ENCODE measurements at regions of chr16 and their contacts with region 1.

Region 1: DNA sequence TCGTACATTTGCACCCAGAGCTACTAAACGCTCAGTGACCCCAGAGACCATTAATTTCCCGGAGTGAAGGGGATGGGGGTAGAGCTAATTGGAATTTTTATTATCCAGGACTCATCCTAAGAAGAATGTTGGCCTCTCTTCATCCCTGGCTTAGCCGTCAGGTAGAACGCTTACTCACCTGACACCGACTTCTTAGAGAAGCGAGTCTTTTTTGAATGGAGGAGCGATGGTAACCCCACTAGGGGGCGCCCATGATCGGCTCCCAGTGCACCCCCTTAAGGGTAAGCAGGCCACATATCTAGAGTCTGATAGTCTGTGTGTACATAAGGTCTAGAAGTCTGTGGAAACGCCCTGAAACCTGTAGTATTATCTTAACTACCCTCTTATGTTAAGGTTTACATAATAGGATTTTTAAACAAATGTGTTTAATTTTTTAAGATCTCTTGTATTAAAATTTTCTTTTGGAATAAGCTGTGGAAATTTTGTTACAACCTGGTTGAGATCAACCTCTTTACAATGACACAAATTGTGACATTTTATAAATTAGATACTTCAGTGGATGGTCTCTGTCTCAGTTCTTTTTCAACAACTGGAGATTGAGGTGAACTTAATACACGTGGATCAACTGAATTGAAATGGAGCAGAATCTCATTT is 229.8 kb downstream of the CPPED1 start:
- DNase-seq: no peak
- ATAC-seq: peak; percentile 81
- H3K4me3 ChIP-seq: no peak overlapping the region
- H3K27ac ChIP-seq: peak overlapping the region; percentile 35; the same call in 1 of the 2 replicates
- H3K4me1 ChIP-seq: peaks cover 9% of the 10 kb centered on the region
- H3K27me3 ChIP-seq: no peaks in the 10 kb centered on the region
- CTCF ChIP-seq: peak; percentile 55 to 70 (median 69)
- EP300 ChIP-seq: no peak
- POLR2A ChIP-seq: no peak
- RAD21 ChIP-seq: peak; percentile 82

Region 2: DNA sequence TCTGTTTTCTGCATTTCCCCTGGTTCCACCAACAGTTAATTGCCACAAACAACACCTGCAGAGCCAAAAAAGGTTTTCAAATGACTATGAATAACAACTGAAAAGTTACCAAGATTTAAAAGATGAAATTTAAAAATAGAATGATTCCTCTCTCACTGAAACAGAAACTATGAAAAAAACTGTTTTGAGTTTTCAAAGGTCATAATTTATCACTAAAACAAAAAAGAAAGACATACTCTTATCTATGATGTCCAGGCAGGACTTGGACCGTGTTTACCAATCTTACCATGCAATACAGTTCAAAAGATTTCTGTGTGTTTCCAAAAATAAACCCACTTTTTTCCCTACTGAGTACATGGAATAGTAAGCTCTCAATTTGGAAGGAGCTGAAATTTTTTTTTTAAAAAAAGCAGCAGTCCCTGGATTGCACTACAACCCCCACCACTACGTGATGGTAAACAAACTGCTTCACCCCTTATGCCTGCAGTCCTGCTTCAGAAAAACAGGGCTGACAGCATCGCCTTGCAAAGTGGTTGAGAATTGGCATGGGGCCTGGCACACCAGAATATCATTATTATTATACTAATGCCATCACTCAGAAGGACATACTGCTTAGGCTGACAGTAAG is 839.7 kb before region 1 on chr16:
- CTCF ChIA-PET with region 1: no interaction called
- POLR2A ChIA-PET with region 1: no interaction called
- RAD21 ChIA-PET with region 1: no interaction called
- SMC1A ChIA-PET with region 1: no interaction called
- in situ Hi-C with region 1: no loop called
- intact Hi-C with region 1: no loop called
- DNase-seq: no peak
- ATAC-seq: peak; percentile 47
- H3K4me3 ChIP-seq: peak overlapping the region; percentile 22
- H3K27ac ChIP-seq: peak overlapping the region; percentile 74
- H3K4me1 ChIP-seq: peaks cover 56% of the 10 kb centered on the region
- H3K27me3 ChIP-seq: no peaks in the 10 kb centered on the region
- CTCF ChIP-seq: no peak
- EP300 ChIP-seq: peak; percentile 38 to 73; a peak in 2 of 4 replicates
- POLR2A ChIP-seq: no peak
- RAD21 ChIP-seq: no peak

Region 3: GRCh38 chr16:12535535-12536411 is 38.1 kb before region 1 on chr16:
- CTCF ChIA-PET with region 1: interaction called, 26 read pairs
- POLR2A ChIA-PET with region 1: no interaction called
- RAD21 ChIA-PET with region 1: interaction called, 13 read pairs
- SMC1A ChIA-PET with region 1: interaction called, 25 read pairs
- in situ Hi-C with region 1: no loop called
- intact Hi-C with region 1: loop called (anchors 2 kb)
- DNase-seq: peak; percentile 97
- ATAC-seq: peak; percentile 79
- H3K4me3 ChIP-seq: 0 out of 2 replicates have a peak overlapping the region, but pooled peaks have one; percentile 14
- H3K27ac ChIP-seq: peak overlapping the region; percentile 77
- H3K4me1 ChIP-seq: peaks cover 57% of the 10 kb centered on the region
- H3K27me3 ChIP-seq: no peaks in the 10 kb centered on the region
- CTCF ChIP-seq: peak in 2 of 3 experiments; percentile 24 to 49; a peak in 3 of 6 replicates
- EP300 ChIP-seq: peak; percentile 79 to 83
- POLR2A ChIP-seq: peak; percentile 68
- RAD21 ChIP-seq: peak; percentile 48

Region 4: GRCh38 chr16:12587170-12587569 is 13.3 kb after region 1 on chr16:
- CTCF ChIA-PET with region 1: interaction called, 16 read pairs
- POLR2A ChIA-PET with region 1: no interaction called
- RAD21 ChIA-PET with region 1: interaction called, 3 read pairs
- SMC1A ChIA-PET with region 1: interaction called, 7 read pairs
- in situ Hi-C with region 1: no loop called
- intact Hi-C with region 1: no loop called
- DNase-seq: no peak
- ATAC-seq: no peak
- H3K4me3 ChIP-seq: no peak overlapping the region
- H3K27ac ChIP-seq: no peak overlapping the region
- H3K4me1 ChIP-seq: peaks cover 4% of the 10 kb centered on the region
- H3K27me3 ChIP-seq: no peaks in the 10 kb centered on the region
- CTCF ChIP-seq: no peak
- EP300 ChIP-seq: no peak
- POLR2A ChIP-seq: no peak
- RAD21 ChIP-seq: no peak

Region 5: DNA sequence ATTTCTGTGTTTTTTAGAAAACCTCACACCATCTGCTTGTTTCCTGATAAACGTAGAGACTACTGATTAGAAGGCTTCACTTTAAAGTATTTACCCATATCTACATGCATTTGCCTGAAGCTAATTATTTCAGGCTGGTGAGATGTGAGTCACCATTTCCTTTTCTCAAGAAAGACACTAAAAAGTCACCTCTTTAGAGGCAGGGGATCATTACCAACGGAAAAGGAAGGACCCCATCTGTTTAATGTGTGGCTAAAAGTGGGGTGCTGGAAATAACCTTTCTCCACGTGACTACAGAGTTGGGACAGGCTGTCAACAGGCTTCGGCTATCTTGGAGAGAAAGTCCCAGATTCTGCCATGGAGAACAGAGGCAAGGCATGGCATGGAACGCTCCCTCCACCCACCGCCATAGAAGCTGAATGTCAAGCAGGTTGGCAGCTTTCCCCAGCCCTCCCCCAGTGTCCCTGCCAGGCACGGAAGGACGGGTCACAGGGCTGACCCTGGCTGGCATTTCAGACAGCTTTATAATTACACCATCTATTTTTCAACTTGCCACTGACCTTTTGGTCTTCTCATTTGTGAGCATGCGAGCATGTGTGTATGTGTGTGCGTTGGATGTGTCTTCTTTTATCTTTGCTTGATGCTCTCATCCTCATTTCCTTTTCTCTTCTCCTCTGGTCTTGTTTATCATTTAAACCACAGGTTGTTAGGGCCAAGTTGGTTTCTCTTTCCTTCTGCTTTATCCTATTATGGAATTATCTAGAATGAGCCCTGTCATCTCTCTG is 72.8 kb after region 1 on chr16:
- CTCF ChIA-PET with region 1: no interaction called
- POLR2A ChIA-PET with region 1: no interaction called
- RAD21 ChIA-PET with region 1: interaction called, 4 read pairs
- SMC1A ChIA-PET with region 1: interaction called, 4 read pairs
- in situ Hi-C with region 1: no loop called
- intact Hi-C with region 1: loop called (anchors 5 kb)
- DNase-seq: peak; percentile 70
- ATAC-seq: peak; percentile 71
- H3K4me3 ChIP-seq: no peak overlapping the region
- H3K27ac ChIP-seq: 0 out of 2 replicates have a peak overlapping the region, but pooled peaks have one; percentile 2
- H3K4me1 ChIP-seq: no peaks in the 10 kb centered on the region
- H3K27me3 ChIP-seq: no peaks in the 10 kb centered on the region
- CTCF ChIP-seq: no peak
- EP300 ChIP-seq: no peak
- POLR2A ChIP-seq: no peak
- RAD21 ChIP-seq: no peak

Region 6: DNA sequence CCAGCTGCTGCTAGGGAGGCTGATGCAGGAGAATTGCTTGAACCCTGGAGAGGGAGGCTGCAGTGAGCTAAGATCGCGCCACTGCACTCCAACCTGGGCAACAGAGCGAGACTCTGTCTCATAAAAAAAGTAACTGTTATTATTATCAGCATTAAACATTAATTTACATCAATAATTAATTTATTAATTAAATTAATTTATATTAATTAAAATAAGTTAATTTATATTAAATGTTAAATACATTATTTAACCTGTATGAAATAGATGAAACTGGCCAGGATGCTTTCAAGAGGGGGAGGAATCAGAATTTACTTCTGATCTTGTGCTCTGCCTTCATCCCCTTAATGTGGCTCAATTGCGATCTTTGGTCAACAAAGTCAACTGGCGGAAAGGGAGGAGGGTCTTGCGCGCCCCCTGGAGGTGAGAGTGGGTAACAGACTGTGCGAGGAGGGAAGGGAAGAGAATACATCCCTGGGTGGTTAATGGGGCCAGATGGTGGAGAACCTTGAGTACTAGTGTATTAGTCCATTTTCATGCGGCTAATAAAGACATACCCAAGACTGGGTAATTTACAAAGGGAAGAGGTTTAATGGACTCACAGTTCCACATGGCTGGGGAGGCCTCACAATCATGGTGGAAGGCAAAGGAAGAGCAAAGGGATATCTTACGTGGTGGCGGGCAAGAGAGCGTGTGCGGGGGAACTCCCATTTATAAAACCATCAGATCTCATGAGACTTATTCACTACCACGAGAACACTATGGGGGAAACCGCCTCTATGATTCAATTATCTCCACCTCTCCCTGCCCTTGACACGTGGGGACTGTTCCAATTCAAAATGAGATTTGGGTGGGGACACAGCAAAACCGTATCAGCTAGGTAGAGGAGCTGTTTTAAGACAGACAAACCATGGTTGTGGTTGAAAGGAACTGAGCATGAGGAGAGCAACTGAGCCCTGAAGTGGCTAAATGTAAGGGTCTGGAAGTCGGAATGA is 245.6 kb after region 1 on chr16:
- CTCF ChIA-PET with region 1: interaction called, 9 read pairs
- POLR2A ChIA-PET with region 1: no interaction called
- RAD21 ChIA-PET with region 1: interaction called, 9 read pairs
- SMC1A ChIA-PET with region 1: interaction called, 11 read pairs
- in situ Hi-C with region 1: loop called (anchors 5 kb)
- intact Hi-C with region 1: loop called (anchors 5 kb)
- DNase-seq: peak; percentile 24
- ATAC-seq: peak; percentile 85
- H3K4me3 ChIP-seq: no peak overlapping the region
- H3K27ac ChIP-seq: no peak overlapping the region
- H3K4me1 ChIP-seq: no peaks in the 10 kb centered on the region
- H3K27me3 ChIP-seq: no peaks in the 10 kb centered on the region
- CTCF ChIP-seq: peak; percentile 58 to 85 (median 76)
- EP300 ChIP-seq: no peak
- POLR2A ChIP-seq: no peak
- RAD21 ChIP-seq: peak; percentile 95

Region 7: DNA sequence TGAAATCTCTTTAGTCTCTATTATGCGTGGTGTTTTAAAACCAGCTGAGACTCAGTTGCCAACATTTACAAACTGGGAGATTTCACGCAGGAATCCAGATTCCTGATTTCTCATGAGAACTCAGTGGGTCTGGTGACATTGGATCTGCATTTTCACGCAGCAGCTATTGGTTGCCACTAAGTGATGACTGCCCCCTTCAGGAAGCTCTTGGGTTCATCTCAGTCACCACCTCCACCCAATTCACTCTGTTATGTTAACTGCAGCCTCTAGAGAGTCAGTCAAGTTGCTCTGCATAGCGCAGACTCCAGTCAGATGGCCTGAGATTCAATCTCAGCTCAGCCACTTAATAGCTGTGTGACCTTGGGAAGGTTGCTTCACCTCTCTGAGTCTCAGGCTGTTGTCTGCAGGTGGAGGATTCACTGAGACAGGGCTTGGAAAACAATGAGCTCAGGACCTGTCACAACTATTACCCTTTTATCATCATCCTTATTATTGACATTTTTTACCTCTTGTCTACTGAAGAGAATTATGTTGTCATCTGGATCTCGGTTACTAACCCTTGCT is 333.9 kb after region 1 on chr16:
- CTCF ChIA-PET with region 1: interaction called, 16 read pairs
- POLR2A ChIA-PET with region 1: no interaction called
- RAD21 ChIA-PET with region 1: interaction called, 12 read pairs
- SMC1A ChIA-PET with region 1: interaction called, 17 read pairs
- in situ Hi-C with region 1: no loop called
- intact Hi-C with region 1: no loop called
- DNase-seq: no peak
- ATAC-seq: peak; percentile 71
- H3K4me3 ChIP-seq: no peak overlapping the region
- H3K27ac ChIP-seq: no peak overlapping the region
- H3K4me1 ChIP-seq: no peaks in the 10 kb centered on the region
- H3K27me3 ChIP-seq: peaks cover 5 to 13% of the 10 kb centered on the region in 2 experiments
- CTCF ChIP-seq: peak; percentile 28 to 41 (median 30); a peak in 4 of 6 replicates
- EP300 ChIP-seq: no peak
- POLR2A ChIP-seq: no peak
- RAD21 ChIP-seq: peak; percentile 32

Measured in GM12878 (cell line).